CD8-positive, alpha-beta T cell (primary cell): ENCODE measurements at regions of chr6 and their contacts with region 1.

Region 1: DNA sequence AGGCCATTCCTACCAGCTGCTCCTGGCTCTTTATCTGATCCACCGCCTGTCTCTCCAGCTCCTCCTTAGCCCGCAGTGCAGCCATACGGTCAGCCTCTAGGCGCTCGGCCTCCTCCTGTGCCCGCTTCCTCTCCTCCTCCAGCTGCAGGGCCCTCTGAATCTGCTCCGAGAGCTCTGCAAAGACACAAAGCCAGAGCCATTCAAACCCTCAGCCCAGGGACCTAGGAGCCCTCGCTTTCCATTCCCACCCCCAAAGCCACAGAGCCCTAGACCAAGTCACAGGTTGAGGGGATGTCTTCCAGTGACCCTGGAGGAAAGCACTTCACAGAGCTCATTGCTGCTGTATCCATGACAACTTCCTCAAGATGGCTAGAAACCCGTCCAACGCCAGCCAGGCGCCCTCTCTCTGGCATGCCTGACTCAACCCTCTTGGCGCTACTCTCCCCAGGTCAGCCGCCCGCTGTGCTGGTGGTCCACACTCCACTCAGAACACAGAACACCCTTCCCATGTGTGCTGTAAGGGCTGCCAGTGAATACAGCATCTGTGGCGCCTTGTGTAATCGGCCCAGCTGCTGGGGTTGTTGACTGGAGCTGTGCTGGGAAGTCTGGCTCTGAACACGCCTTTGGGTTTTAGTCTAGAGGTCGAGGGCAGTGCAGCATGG is 49.3 kb downstream of the EZR start:
- DNase-seq: peak in 1 of 9 experiments; percentile 35
- ATAC-seq: no peak
- H3K4me3 ChIP-seq: no peak overlapping the region
- H3K4me3 Mint-ChIP-seq: peak overlapping the region; percentile 9
- H3K27ac ChIP-seq: peak overlapping the region in 1 of 2 experiments; percentile 40
- H3K27ac Mint-ChIP-seq: peak overlapping the region; percentile 3
- H3K4me1 ChIP-seq: peaks cover 36% of the 10 kb centered on the region
- H3K4me1 Mint-ChIP-seq: peaks cover 45% of the 10 kb centered on the region
- H3K27me3 ChIP-seq: no peaks in the 10 kb centered on the region
- H3K27me3 Mint-ChIP-seq: no peaks in the 10 kb centered on the region
- CTCF ChIP-seq: no peak

Region 2: DNA sequence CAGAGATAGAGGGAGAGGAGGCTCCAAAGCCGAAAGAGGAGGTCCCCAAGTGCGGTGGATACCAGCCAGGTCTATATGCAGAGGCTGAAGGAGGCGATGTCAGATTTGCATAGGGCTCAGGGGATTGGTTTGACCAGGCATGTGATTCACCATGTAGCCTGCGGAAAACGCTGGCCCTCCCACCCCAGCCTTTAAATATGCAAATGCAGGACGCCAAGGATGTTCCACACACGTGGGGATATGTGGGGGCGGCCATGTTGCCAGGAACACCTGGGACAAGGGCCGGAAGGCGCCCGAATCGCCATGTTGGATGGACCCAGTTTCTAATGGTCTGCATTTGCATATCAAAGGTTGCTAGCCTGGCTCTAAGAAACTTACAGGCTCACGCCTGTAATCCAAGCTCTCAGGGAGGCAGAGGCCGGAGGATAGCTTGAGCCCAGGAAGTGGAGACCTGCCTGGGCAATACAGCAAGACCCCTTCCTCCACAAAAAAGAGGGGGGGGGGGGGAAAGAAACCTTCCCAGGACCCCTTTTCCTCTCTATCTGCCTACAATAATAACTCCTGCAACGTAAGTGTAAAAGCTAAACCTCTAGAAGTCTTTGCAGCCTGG is 347.2 kb before region 1 on chr6:
- CTCF ChIA-PET with region 1: no interaction called
- POLR2A ChIA-PET with region 1: no interaction called
- intact Hi-C with region 1: no loop called
- DNase-seq: no peak
- ATAC-seq: no peak
- H3K4me3 ChIP-seq: no peak overlapping the region
- H3K4me3 Mint-ChIP-seq: no peak overlapping the region
- H3K27ac ChIP-seq: no peak overlapping the region
- H3K27ac Mint-ChIP-seq: no peak overlapping the region
- H3K4me1 ChIP-seq: no peaks in the 10 kb centered on the region
- H3K4me1 Mint-ChIP-seq: no peaks in the 10 kb centered on the region
- H3K27me3 ChIP-seq: no peaks in the 10 kb centered on the region
- H3K27me3 Mint-ChIP-seq: no peaks in the 10 kb centered on the region
- CTCF ChIP-seq: no peak

Region 3: GRCh38 chr6:158808941-158809678 is 39.2 kb after region 1 on chr6:
- CTCF ChIA-PET with region 1: interaction called, 3 read pairs
- POLR2A ChIA-PET with region 1: no interaction called
- intact Hi-C with region 1: loop called in 1 of 2 experiments (anchors 5 kb)
- DNase-seq: peak in 5 of 9 experiments; percentile 44 to 76 (median 68)
- ATAC-seq: peak; percentile 71
- H3K4me3 ChIP-seq: no peak overlapping the region
- H3K4me3 Mint-ChIP-seq: peak overlapping the region; percentile 61
- H3K27ac ChIP-seq: peak overlapping the region in 1 of 2 experiments; percentile 46
- H3K27ac Mint-ChIP-seq: peak overlapping the region; percentile 91
- H3K4me1 ChIP-seq: peaks cover 92% of the 10 kb centered on the region
- H3K4me1 Mint-ChIP-seq: peaks cover 96% of the 10 kb centered on the region
- H3K27me3 ChIP-seq: no peaks in the 10 kb centered on the region
- H3K27me3 Mint-ChIP-seq: no peaks in the 10 kb centered on the region
- CTCF ChIP-seq: no peak

Region 4: GRCh38 chr6:159151266-159151855 is 381.5 kb after region 1 on chr6:
- CTCF ChIA-PET with region 1: no interaction called
- POLR2A ChIA-PET with region 1: no interaction called
- intact Hi-C with region 1: no loop called
- DNase-seq: peak in 6 of 9 experiments; percentile 7 to 59 (median 34)
- ATAC-seq: peak; percentile 46
- H3K4me3 ChIP-seq: no peak overlapping the region
- H3K4me3 Mint-ChIP-seq: no peak overlapping the region
- H3K27ac ChIP-seq: no peak overlapping the region
- H3K27ac Mint-ChIP-seq: no peak overlapping the region
- H3K4me1 ChIP-seq: peaks cover 5% of the 10 kb centered on the region
- H3K4me1 Mint-ChIP-seq: peaks cover 2% of the 10 kb centered on the region
- H3K27me3 ChIP-seq: no peaks in the 10 kb centered on the region
- H3K27me3 Mint-ChIP-seq: peaks cover 4% of the 10 kb centered on the region
- CTCF ChIP-seq: peak; percentile 87